Activated B cell treated with CpG ODN at 0.5 μM for 24 hours (primary cell): ENCODE measurements at regions of chr2 and their contacts with region 1.

Region 1: DNA sequence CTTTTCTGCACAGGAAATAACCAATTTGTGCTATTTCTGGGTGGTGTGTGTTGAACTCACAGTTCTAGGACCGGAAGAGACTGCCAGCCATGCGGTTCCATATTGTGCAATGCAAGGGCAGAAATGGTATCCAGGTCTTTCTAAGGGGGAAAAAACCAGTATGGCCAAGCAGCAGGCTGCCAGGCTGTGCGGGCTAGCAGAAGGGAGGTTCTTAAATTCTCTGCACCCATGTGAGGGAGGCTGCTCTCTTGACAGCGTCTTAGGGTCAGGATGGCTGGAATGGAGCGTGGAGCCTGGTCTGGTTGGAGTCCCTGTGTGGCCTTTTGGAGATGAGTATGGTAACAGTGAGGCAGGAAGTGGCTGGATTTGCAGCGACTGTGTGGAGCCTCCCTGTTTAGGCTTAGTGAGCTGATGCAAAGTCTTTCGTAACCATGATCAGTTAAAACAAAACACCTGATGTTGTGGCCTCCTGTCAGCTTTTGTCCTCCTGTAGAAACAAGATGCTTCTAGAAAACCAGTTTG is 52.6 kb downstream of the NCK2 start:
- DNase-seq: no peak
- ATAC-seq: peak; percentile 29
- H3K4me3 Mint-ChIP-seq: peak overlapping the region; percentile 68
- H3K27ac Mint-ChIP-seq: peak overlapping the region; percentile 90
- H3K4me1 Mint-ChIP-seq: peaks cover 95% of the 10 kb centered on the region
- H3K27me3 Mint-ChIP-seq: no peaks in the 10 kb centered on the region
- CTCF ChIP-seq: no peak

Region 2: GRCh38 chr2:105502625-105503334 is 294.6 kb before region 1 on chr2:
- CTCF ChIA-PET with region 1: no interaction called
- POLR2A ChIA-PET with region 1: no interaction called
- intact Hi-C with region 1: no loop called
- DNase-seq: no peak
- ATAC-seq: no peak
- H3K4me3 Mint-ChIP-seq: no peak overlapping the region
- H3K27ac Mint-ChIP-seq: no peak overlapping the region
- H3K4me1 Mint-ChIP-seq: no peaks in the 10 kb centered on the region
- H3K27me3 Mint-ChIP-seq: peaks cover 12% of the 10 kb centered on the region
- CTCF ChIP-seq: no peak

Region 3: DNA sequence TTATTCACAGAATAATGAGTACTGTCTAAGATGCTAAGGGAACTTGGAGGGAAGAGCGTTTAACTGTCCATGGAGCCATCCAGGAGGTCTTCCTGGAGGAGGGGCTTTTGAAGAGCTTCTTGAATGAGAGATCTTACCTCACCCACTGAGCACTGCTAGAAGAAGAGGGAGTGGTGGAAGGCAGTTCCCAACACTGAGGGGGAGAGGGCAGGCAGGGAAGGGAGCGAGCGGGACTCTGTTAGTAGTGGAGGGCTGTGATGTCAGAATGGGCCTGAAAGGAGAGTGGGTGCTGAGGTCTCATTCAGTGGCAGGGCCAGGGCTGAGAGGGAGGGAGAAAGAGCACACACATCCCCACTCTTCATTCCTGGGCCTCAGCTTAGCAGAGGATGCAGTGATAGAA is 12.4 kb after region 1 on chr2:
- CTCF ChIA-PET with region 1: no interaction called
- POLR2A ChIA-PET with region 1: interaction called, 6 read pairs
- intact Hi-C with region 1: loop called (anchors 1 kb)
- DNase-seq: no peak
- ATAC-seq: no peak
- H3K4me3 Mint-ChIP-seq: peak overlapping the region; percentile 29
- H3K27ac Mint-ChIP-seq: peak overlapping the region; percentile 57
- H3K4me1 Mint-ChIP-seq: peaks cover 88% of the 10 kb centered on the region
- H3K27me3 Mint-ChIP-seq: no peaks in the 10 kb centered on the region
- CTCF ChIP-seq: no peak

Region 4: GRCh38 chr2:105834931-105835330 is 37.6 kb after region 1 on chr2:
- CTCF ChIA-PET with region 1: no interaction called
- POLR2A ChIA-PET with region 1: no interaction called
- intact Hi-C with region 1: loop called (anchors 1 kb)
- DNase-seq: no peak
- ATAC-seq: peak; percentile 72
- H3K4me3 Mint-ChIP-seq: peak overlapping the region; percentile 56
- H3K27ac Mint-ChIP-seq: peak overlapping the region; percentile 82
- H3K4me1 Mint-ChIP-seq: peaks cover 75% of the 10 kb centered on the region
- H3K27me3 Mint-ChIP-seq: no peaks in the 10 kb centered on the region
- CTCF ChIP-seq: no peak

Region 5: DNA sequence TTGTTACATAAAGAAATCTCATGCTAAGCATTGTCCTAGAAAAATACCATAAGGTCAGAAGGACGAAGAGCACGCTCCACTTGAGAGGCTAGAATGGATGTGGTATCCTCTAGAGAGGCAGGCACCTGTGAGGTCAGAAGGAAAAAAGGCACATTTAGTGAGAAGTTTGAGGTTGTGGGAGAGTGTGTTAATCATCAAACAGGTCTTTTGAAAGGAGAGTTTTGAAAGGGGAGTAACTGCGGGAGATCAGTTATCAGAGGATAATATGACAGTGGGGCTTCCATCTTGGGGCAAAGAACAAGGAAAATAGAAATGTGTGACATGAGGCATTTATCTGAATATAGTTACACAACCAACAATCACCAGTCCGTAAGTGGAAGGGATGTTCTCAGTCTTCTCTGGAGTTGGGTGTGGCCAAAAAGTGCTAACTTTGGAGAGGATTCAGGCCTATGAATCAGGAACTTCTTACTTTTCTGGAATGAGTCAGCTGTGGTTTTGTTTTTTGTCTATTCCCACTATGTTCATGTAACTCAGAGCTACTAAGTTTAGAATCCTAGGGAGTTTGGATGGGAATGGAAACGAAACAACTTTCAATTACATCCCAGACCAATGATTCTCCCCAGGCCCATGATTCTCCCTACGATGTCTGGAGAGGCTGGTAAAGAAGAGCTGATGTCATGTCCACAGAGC is 1540.0 kb after region 1 on chr2:
- CTCF ChIA-PET with region 1: no interaction called
- POLR2A ChIA-PET with region 1: no interaction called
- intact Hi-C with region 1: no loop called
- DNase-seq: no peak
- ATAC-seq: no peak
- H3K4me3 Mint-ChIP-seq: no peak overlapping the region
- H3K27ac Mint-ChIP-seq: no peak overlapping the region
- H3K4me1 Mint-ChIP-seq: no peaks in the 10 kb centered on the region
- H3K27me3 Mint-ChIP-seq: no peaks in the 10 kb centered on the region
- CTCF ChIP-seq: no peak